Activated CD8-positive, alpha-beta T cell treated with anti-CD3 and anti-CD28 coated beads, Interleukin-2, amount 10 ng/mL, durations not matched to agents 7 days and 5 days (primary cell): ENCODE measurements at regions of chr12 and their contacts with region 1.

Region 1: DNA sequence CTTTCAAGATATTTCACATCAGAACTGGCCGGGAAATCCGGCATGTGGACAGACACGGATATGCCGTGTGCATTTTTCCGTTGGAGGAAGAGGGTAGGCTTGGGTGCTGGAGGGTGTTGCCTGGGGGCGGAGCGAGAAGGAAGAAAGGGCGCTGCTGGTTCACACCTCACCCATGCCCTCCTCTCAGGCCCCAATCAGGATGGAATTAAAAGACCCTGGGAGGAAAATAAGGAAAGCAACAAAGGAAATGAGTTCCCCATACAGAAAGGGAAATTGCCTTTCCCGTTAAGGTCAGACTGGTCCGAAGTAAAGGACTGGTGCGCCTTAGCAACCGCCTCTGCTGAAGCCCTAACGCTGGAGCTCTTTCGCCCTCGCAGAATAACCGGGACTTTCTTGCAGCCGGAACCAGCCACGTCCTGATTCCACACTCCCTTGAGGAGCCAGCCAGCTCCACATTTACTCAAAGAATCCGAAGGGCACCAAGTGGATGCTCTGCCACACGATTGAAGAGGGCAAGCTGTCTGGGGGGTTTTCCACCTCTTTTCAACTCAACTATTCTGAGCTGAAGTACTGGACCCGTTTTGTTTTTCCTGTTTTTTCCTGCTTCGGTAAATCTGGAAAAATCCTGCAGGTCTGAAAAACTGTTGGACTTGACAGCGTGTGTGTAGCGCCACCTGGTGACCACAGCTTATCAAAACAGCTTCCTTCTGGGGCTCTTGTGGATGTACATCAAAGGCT is 37.7 kb upstream of the BCL2L14 start:
- DNase-seq: peak; percentile 75
- ATAC-seq: peak; percentile 91
- H3K4me3 Mint-ChIP-seq: peak overlapping the region; percentile 72
- H3K27ac Mint-ChIP-seq: peak overlapping the region; percentile 71
- H3K4me1 Mint-ChIP-seq: peaks cover 21% of the 10 kb centered on the region
- H3K27me3 Mint-ChIP-seq: peaks cover 3% of the 10 kb centered on the region

Region 2: DNA sequence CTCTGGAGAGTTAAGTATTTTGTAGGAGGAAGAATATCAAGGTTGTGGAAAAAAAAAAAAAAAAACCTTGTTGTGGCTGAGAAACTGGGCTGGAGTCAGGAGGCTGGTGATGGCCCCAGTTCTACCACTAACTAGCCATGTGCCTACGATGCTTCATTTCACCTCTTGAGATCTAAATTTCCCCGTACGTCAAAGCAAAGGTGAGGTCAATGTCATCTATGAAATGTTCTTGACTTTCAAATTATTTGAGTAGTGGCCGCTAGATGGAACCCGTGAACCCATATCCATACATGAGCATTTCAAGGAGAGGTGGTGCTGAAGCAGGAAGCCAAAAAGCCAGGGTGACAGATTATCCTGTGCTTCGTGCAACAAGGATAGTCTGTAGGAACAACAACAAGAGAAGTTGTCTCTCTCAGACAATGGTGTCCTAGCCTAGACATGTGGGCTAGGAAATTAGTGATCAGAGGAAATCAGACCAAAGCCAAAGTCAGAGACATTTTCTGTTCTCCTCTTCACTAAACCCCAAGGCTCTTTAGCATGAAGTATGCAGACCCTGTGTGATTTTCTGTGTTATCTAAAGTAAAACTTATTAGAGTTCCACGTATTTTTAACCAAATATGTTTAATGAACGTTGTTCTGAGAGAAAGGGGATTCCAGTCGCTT is 479.0 kb before region 1 on chr12:
- CTCF ChIA-PET with region 1: interaction called, 24 read pairs
- POLR2A ChIA-PET with region 1: no interaction called
- DNase-seq: peak; percentile 80
- ATAC-seq: peak; percentile 74
- H3K4me3 Mint-ChIP-seq: no peak overlapping the region
- H3K27ac Mint-ChIP-seq: no peak overlapping the region
- H3K4me1 Mint-ChIP-seq: peaks cover 22% of the 10 kb centered on the region
- H3K27me3 Mint-ChIP-seq: peaks cover 6% of the 10 kb centered on the region

Region 3: GRCh38 chr12:11621797-11622423 is 411.1 kb before region 1 on chr12:
- CTCF ChIA-PET with region 1: interaction called, 11 read pairs
- POLR2A ChIA-PET with region 1: no interaction called
- DNase-seq: peak; percentile 24
- ATAC-seq: no peak
- H3K4me3 Mint-ChIP-seq: no peak overlapping the region
- H3K27ac Mint-ChIP-seq: no peak overlapping the region
- H3K4me1 Mint-ChIP-seq: peaks cover 5% of the 10 kb centered on the region
- H3K27me3 Mint-ChIP-seq: peaks cover 5% of the 10 kb centered on the region

Region 4: DNA sequence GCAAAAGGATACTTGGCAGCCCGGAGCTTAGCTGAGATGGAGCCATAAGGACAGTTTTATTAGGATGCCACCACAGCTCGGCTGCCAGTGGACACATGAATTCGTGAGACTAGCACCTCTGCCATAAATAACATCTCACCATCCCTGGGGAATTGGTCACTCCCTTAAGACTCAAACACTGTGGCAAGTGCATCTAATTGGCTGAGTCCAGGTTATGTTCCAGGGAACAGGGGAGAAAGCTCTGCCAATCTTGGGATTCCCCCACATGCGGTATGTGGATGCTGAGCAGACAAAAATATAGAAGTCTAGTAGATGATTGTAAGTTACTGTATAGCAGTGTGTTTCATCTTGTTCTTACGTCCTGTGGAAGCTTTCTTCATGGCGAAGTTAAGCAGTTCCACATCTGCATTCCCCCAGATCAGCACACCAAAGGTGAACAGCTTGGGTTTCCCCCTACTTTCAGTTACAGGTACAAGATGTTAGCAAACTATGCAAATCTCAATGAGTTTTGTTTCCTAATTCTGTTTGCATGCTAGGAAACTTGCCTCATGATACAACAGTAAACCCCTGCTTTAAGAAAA is 252.4 kb before region 1 on chr12:
- CTCF ChIA-PET with region 1: interaction called, 11 read pairs
- POLR2A ChIA-PET with region 1: no interaction called
- DNase-seq: no peak
- ATAC-seq: no peak
- H3K4me3 Mint-ChIP-seq: no peak overlapping the region
- H3K27ac Mint-ChIP-seq: no peak overlapping the region
- H3K4me1 Mint-ChIP-seq: peaks cover 18% of the 10 kb centered on the region
- H3K27me3 Mint-ChIP-seq: no peaks in the 10 kb centered on the region

Region 5: GRCh38 chr12:12003609-12004008 is 29.4 kb before region 1 on chr12:
- CTCF ChIA-PET with region 1: interaction called, 90 read pairs
- POLR2A ChIA-PET with region 1: no interaction called
- DNase-seq: no peak
- ATAC-seq: no peak
- H3K4me3 Mint-ChIP-seq: no peak overlapping the region
- H3K27ac Mint-ChIP-seq: peak overlapping the region; percentile 39
- H3K4me1 Mint-ChIP-seq: peaks cover 38% of the 10 kb centered on the region
- H3K27me3 Mint-ChIP-seq: peaks cover 8% of the 10 kb centered on the region

Region 6: DNA sequence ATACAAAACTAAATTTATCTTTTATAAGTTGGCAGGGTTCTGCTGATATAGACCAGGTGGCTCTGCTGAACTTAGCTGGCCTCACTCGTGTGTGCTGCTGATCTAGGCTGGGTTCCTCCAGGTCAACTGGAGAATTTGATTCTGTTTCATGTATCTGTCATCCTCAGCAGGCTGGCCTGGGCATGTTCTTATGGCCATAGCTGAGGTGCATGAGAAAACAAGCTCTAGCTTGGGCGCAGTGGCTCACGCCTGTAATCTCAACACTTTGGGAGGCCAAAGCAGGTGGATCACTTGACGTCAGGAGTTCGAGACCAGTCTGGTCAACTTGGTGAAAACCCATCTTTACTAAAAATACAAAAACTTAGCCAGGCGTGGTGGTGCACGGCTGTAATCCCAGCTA is 13.4 kb after region 1 on chr12:
- CTCF ChIA-PET with region 1: interaction called, 12 read pairs
- POLR2A ChIA-PET with region 1: no interaction called
- DNase-seq: no peak
- ATAC-seq: no peak
- H3K4me3 Mint-ChIP-seq: no peak overlapping the region
- H3K27ac Mint-ChIP-seq: no peak overlapping the region
- H3K4me1 Mint-ChIP-seq: no peaks in the 10 kb centered on the region
- H3K27me3 Mint-ChIP-seq: peaks cover 16% of the 10 kb centered on the region

Region 7: DNA sequence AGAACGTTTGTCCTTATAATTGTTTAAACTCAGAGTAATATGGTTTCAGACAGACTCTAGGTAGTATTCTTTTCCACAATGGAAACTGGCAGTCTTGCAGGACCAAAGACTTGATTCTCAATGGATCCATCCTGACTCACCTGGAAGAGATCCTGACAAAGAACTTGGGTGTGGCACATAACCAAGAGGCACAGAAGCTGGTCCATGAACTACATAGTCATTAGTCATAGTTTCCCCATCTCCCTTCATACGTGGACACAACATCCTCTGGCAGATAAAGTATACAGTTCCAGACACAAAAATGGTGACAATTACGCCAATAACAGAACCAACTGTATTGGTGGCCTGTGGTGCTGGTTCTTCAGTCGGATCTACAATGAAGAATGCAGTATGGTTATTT is 93.5 kb after region 1 on chr12:
- CTCF ChIA-PET with region 1: no interaction called
- POLR2A ChIA-PET with region 1: no interaction called
- DNase-seq: no peak
- ATAC-seq: no peak
- H3K4me3 Mint-ChIP-seq: no peak overlapping the region
- H3K27ac Mint-ChIP-seq: no peak overlapping the region
- H3K4me1 Mint-ChIP-seq: no peaks in the 10 kb centered on the region
- H3K27me3 Mint-ChIP-seq: peaks cover 21% of the 10 kb centered on the region

Region 8: GRCh38 chr12:12334367-12335040 is 301.5 kb after region 1 on chr12:
- CTCF ChIA-PET with region 1: interaction called, 15 read pairs
- POLR2A ChIA-PET with region 1: no interaction called
- DNase-seq: peak; percentile 76
- ATAC-seq: peak; percentile 84
- H3K4me3 Mint-ChIP-seq: no peak overlapping the region
- H3K27ac Mint-ChIP-seq: peak overlapping the region; percentile 1
- H3K4me1 Mint-ChIP-seq: peaks cover 24% of the 10 kb centered on the region
- H3K27me3 Mint-ChIP-seq: peaks cover 12% of the 10 kb centered on the region